SK-N-SH (cell line): ENCODE measurements at regions of chr15 and their contacts with region 1.

Region 1: GRCh38 chr15:84600851-84601838 is at the start of gene ZSCAN2:
- DNase-seq: peak; percentile 95
- H3K4me3 ChIP-seq: peak within 1 kb of the TSS; percentile 87 to 95
- H3K27ac ChIP-seq: peak within 1 kb of the TSS; percentile 58 to 71
- H3K4me1 ChIP-seq: peaks cover 0 to 14% of the 10 kb centered on the region in 2 experiments; a peak in 1 of 4 replicates
- H3K27me3 ChIP-seq: no peaks in the 10 kb centered on the region
- CTCF ChIP-seq: no peak
- EP300 ChIP-seq: no peak
- RAD21 ChIP-seq: no peak
- polyA plus RNA-seq, gene ZSCAN2: 17.8 and 22.0 TPM in 2 replicates

Region 2: DNA sequence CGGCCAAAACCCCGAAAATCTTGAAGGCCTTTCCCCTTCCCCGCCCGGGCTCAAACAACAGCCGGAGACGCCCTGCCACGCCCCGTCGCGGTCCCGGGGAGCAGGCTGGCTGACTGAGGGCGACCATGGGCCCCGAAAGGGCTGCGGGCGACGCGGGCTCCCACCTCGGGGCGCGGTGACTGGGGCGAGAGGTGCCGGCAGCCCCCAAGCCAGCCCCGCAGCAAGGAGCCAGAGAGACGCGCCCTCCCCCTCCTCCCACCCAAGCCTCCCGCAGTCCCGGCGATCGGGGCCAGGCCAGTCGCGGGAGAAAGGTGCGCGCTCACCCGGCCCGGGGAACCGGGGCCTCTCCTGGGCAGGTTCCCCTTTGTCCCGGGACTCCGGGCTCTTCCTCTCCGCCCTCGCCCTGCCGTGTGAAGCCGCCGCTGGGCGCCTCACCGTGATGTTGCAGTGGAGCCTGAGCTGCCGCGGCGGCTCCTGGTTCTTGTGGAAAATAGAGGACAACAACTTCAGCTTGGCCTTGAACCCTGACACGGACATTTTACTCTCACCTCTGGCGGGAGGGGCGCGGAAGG is 30.9 kb before region 1 on chr15:
- CTCF ChIA-PET with region 1: interaction called, 14 read pairs
- POLR2A ChIA-PET with region 1: no interaction called
- DNase-seq: peak; percentile 70
- H3K4me3 ChIP-seq: peak overlapping the region; percentile 84 to 85
- H3K27ac ChIP-seq: peak overlapping the region; percentile 80 to 81
- H3K4me1 ChIP-seq: no peaks in the 10 kb centered on the region; a peak in 2 of 4 replicates
- H3K27me3 ChIP-seq: no peaks in the 10 kb centered on the region
- CTCF ChIP-seq: no peak
- EP300 ChIP-seq: no peak
- RAD21 ChIP-seq: no peak

Region 3: GRCh38 chr15:84588053-84588874 is 12.9 kb before region 1 on chr15:
- CTCF ChIA-PET with region 1: interaction called, 51 read pairs
- POLR2A ChIA-PET with region 1: interaction called, 3 read pairs
- DNase-seq: peak; percentile 94
- H3K4me3 ChIP-seq: peak overlapping the region; percentile 8 to 36; a peak in 2 of 4 replicates
- H3K27ac ChIP-seq: no peak overlapping the region
- H3K4me1 ChIP-seq: peaks cover 0 to 4% of the 10 kb centered on the region in 2 experiments; a peak in 1 of 4 replicates
- H3K27me3 ChIP-seq: no peaks in the 10 kb centered on the region
- CTCF ChIP-seq: peak; percentile 64
- EP300 ChIP-seq: no peak
- RAD21 ChIP-seq: peak; percentile 83

Region 4: GRCh38 chr15:84629033-84629432 is 27.9 kb after region 1 on chr15:
- CTCF ChIA-PET with region 1: interaction called, 11 read pairs
- POLR2A ChIA-PET with region 1: interaction called, 7 read pairs
- DNase-seq: no peak
- H3K4me3 ChIP-seq: no peak overlapping the region
- H3K27ac ChIP-seq: no peak overlapping the region
- H3K4me1 ChIP-seq: peaks cover 13 to 15% of the 10 kb centered on the region in 2 experiments; a peak in 2 of 4 replicates
- H3K27me3 ChIP-seq: no peaks in the 10 kb centered on the region
- CTCF ChIP-seq: no peak
- EP300 ChIP-seq: no peak
- RAD21 ChIP-seq: no peak

Region 5: DNA sequence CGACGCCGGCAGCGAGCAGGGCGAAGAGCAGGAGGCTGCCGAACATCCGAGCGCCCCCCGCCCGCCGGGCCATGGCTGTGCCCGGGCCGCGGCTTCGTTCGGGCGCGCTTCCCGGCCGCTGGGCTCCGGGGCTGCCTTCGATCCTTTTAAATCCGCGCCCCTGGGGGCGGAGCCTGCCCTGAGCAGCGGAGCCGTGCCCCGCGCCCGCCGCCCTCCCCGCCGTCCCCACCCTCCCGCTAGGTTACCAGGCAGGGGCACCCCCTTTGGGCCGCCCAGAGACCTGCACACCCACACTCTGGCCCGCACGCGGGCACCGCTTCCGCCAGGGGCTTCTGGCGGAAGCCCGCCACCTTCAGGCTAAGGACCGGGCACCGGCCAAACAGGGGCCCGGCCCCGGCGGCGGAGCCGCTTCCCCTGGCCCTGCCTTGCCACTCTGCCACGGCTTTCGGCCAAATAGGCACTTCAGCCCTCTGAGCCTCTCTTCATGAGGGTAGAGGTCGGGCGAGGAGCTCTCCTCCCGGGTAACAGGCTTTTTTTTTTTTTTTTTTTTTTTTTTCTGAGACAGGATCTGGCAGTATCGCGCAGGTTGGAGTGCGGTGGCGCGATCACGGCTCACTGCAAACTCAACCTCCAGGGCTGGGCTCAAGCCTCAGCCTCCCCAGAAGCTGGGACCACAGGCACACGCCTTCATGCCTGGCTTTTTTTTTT is 57.1 kb after region 1 on chr15 and contains the start of gene NMB:
- CTCF ChIA-PET with region 1: interaction called, 16 read pairs
- POLR2A ChIA-PET with region 1: interaction called, 12 read pairs
- DNase-seq: peak; percentile 98
- H3K4me3 ChIP-seq: peak within 1 kb of the TSS; percentile 52 to 54; a peak in 3 of 4 replicates
- H3K27ac ChIP-seq: peak within 1 kb of the TSS; percentile 53 to 83
- H3K4me1 ChIP-seq: peaks cover 4 to 23% of the 10 kb centered on the region in 2 experiments; a peak in 2 of 4 replicates
- H3K27me3 ChIP-seq: no peaks in the 10 kb centered on the region
- CTCF ChIP-seq: peak; percentile 70
- EP300 ChIP-seq: no peak
- RAD21 ChIP-seq: peak; percentile 36
- polyA plus RNA-seq, gene NMB: 5.3 and 6.5 TPM in 2 replicates